ENCODE measurements at regions of chr4 and their contacts with region 1.

Region 1: DNA sequence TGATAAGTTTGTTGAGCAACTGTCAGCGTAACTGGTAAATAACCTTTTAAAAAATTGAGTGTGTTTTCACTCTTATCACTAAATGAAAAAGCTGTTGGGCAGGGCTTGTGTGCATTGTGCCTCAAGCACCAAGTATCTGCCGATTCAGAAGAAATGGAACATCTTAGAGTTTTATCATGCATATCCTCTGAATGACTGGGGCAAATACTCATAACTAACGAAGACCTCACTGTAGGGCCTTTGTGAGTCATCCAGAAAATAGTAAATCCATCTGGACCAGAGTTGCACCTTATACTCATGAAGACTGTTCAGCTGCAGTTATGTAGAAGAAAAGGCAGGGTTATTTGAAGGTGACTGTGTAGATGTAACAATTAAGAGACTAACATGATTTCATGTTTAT is 222.1 kb downstream of the CAMK2D start:
- DNase-seq: no peak
- ATAC-seq: no peak
- H3K4me3 ChIP-seq: no peak overlapping the region
- H3K27ac ChIP-seq: peak overlapping the region in 6 of 10 donors; percentile 14 to 83 (median 78)
- H3K4me1 ChIP-seq: peaks cover 3 to 74% (median 44%) of the 10 kb centered on the region in 9 donors
- H3K27me3 ChIP-seq: no peaks in the 10 kb centered on the region
- CTCF ChIP-seq: no peak

Region 2: GRCh38 chr4:113328514-113328913 is 210.9 kb before region 1 on chr4:
- intact Hi-C with region 1: no loop called
- DNase-seq: no peak
- ATAC-seq: peak in 1 of 8 donors; percentile 53
- H3K4me3 ChIP-seq: no peak overlapping the region
- H3K27ac ChIP-seq: no peak overlapping the region
- H3K4me1 ChIP-seq: peaks cover 0 to 3% (median 0%) of the 10 kb centered on the region in 9 donors
- H3K27me3 ChIP-seq: no peaks in the 10 kb centered on the region
- CTCF ChIP-seq: peak in 7 of 9 donors; percentile 35 to 46 (median 43)

Region 3: DNA sequence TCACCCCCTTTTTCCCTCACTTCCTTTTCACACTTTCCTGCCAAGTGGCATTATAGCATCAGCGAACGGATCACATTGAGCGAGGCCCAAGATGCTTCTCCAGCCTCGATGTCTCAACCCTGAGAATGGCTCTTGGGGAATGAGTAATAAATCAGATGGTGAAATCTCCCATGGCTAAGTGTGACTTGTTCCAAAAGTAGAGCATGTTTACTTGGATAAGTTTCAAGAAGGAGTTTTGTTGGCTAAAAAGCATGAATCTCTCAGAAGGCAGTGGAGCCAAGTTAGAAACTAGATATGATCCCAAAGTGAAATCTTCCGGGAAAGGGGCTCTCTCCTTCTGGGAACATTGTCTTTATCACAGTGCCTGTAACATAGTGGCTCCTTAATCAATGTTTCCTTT is 94.1 kb before region 1 on chr4:
- intact Hi-C with region 1: loop called in 1 of 10 experiments (anchors 10 kb)
- DNase-seq: peak; percentile 24 to 57
- ATAC-seq: peak; percentile 69 to 93 (median 79)
- H3K4me3 ChIP-seq: no peak overlapping the region
- H3K27ac ChIP-seq: peak overlapping the region; percentile 30 to 73 (median 67)
- H3K4me1 ChIP-seq: peaks cover 4 to 65% (median 42%) of the 10 kb centered on the region in 9 donors
- H3K27me3 ChIP-seq: no peaks in the 10 kb centered on the region
- CTCF ChIP-seq: no peak

Region 4: DNA sequence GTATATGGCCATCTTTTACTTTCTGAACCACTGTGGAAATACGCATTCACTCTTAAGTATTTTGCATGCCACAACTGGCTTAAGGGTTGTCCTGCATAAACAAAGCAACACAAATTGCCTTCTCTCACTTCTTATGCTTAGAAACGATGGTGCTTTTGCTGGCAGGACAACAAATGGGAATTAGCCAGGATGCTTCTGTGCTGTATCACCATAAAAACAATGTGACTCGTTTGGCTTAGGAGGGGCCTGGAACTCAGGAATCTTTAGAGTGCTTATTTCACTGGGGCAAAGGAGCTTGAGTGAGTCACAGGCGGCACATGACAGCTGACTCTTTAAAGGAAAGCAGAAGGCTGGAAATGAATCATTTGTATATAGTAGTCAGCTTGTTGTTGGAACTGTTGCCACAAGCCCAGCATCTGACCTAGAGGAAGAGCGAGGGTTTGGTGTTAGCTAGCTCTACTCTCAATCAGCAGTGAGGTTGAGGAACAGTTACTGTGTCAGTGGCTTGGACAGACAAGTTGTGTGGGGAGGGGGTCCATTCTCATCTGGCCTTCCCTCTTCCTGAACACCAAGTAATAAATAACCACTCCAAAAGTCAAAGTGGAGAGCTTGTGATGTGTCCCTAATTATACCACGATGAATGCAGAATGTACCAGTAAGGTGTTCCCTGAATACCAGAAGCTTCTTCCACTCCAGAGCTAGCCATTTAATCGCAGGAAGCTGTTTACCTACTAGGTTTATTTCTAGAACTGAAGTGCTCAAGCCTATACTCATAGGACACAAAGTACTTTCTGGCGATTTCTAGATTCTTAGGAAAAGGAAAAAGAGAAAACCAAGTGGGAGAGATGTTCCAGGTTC is 71.0 kb before region 1 on chr4:
- intact Hi-C with region 1: loop called in 1 of 10 experiments (anchors 5 kb)
- DNase-seq: peak; percentile 19 to 82
- ATAC-seq: peak; percentile 92 to 97 (median 94)
- H3K4me3 ChIP-seq: no peak overlapping the region
- H3K27ac ChIP-seq: peak overlapping the region; percentile 69 to 90 (median 86)
- H3K4me1 ChIP-seq: peaks cover 7 to 62% (median 38%) of the 10 kb centered on the region in 9 donors
- H3K27me3 ChIP-seq: no peaks in the 10 kb centered on the region
- CTCF ChIP-seq: no peak

Region 5: GRCh38 chr4:113584407-113585150 is 45.2 kb after region 1 on chr4:
- intact Hi-C with region 1: no loop called
- DNase-seq: no peak
- ATAC-seq: peak in 7 of 8 donors; percentile 29 to 66 (median 43)
- H3K4me3 ChIP-seq: no peak overlapping the region
- H3K27ac ChIP-seq: peak overlapping the region; percentile 14 to 85 (median 77)
- H3K4me1 ChIP-seq: peaks cover 0 to 67% (median 50%) of the 10 kb centered on the region in 9 donors
- H3K27me3 ChIP-seq: no peaks in the 10 kb centered on the region
- CTCF ChIP-seq: no peak